Transverse colon (tissue), 4 donors: ENCODE measurements at regions of chr11 and their contacts with region 1.

Region 1: DNA sequence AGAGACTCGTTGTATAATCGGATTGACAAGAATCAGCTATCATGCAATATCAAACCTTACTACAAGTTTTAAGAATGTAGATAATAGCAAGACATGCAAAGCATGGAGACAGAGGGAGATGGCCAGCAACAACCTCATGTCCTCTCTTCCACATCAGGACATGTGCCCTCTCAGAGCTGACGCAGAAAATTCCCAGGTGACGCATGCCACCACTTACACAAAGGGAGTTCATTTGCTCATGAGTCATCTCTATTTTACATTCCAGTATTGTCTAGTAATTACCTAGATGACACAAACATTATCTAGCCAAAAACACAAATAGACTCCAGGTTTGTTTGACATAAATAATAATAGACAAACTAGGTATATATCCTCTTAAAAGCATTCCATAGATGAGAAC is 38.1 kb upstream of the OPCML start:
- DNase-seq: no peak
- H3K4me3 ChIP-seq: no peak overlapping the region
- H3K27ac ChIP-seq: no peak overlapping the region
- H3K4me1 ChIP-seq: no peaks in the 10 kb centered on the region
- H3K27me3 ChIP-seq: no peaks in the 10 kb centered on the region
- CTCF ChIP-seq: no peak
- EP300 ChIP-seq: no peak
- POLR2A ChIP-seq: no peak

Region 2: GRCh38 chr11:133712051-133712560 is 141.7 kb after region 1 on chr11:
- in situ Hi-C with region 1: no loop called
- intact Hi-C with region 1: loop called (anchors 5 kb)
- DNase-seq: no peak
- H3K4me3 ChIP-seq: no peak overlapping the region
- H3K27ac ChIP-seq: peak overlapping the region in 1 of 4 donors; percentile 6
- H3K4me1 ChIP-seq: no peaks in the 10 kb centered on the region
- H3K27me3 ChIP-seq: no peaks in the 10 kb centered on the region
- CTCF ChIP-seq: no peak
- EP300 ChIP-seq: no peak
- POLR2A ChIP-seq: no peak

Region 3: DNA sequence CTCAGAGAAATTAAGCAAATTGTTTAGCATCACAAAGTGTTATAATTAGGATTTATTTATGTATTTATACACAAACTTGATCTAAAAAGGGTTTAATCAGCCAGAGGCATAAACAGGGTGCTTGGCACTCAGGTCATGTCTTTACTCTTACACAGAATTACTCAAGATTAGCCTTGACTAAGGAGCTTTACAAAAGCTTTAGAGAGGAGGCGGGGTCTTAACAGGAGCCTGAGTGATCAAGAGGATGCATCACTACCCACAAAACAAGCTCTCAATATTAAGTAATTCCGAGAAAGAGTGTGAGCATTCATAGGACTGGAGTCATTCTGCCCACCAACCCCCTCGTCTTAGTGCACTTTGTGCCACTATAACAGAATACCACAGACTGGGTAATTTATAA is 172.0 kb after region 1 on chr11:
- in situ Hi-C with region 1: no loop called
- intact Hi-C with region 1: no loop called
- DNase-seq: no peak
- H3K4me3 ChIP-seq: no peak overlapping the region
- H3K27ac ChIP-seq: no peak overlapping the region
- H3K4me1 ChIP-seq: no peaks in the 10 kb centered on the region
- H3K27me3 ChIP-seq: no peaks in the 10 kb centered on the region
- CTCF ChIP-seq: no peak
- EP300 ChIP-seq: no peak
- POLR2A ChIP-seq: no peak